ENCODE measurements at regions of chr20 and their contacts with region 1.

Region 1: GRCh38 chr20:63973636-63974402 is 4.1 kb upstream of the ZNF512B start:
- DNase-seq: peak; percentile 77
- ATAC-seq: peak; percentile 31
- H3K4me3 Mint-ChIP-seq: no peak overlapping the region
- H3K27ac Mint-ChIP-seq: no peak overlapping the region
- H3K4me1 Mint-ChIP-seq: peaks cover 38% of the 10 kb centered on the region
- H3K27me3 Mint-ChIP-seq: no peaks in the 10 kb centered on the region
- CTCF ChIP-seq: peak; percentile 99

Region 2: DNA sequence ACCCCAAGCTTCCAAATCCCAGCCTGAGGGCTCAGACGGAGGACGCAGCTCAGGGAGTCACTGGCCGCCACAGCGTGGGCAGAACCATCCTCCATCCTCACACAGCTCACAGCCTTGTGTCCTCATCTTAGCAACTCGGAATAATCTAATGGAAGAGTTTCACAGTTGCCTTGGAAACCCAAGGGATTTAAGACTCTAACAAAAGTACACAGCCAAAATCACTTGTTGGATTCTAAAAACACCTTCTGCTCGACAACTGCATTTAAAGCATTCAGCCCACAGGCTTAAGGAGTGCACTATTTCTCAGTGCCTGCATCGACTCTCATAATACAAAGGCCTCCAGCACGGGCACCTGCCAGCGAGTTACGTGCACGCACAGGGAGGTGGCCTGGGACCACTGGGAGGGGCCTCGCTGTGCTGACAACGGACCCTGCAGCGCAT is 188.1 kb before region 1 on chr20:
- CTCF ChIA-PET with region 1: interaction called, 5 read pairs
- POLR2A ChIA-PET with region 1: no interaction called
- intact Hi-C with region 1: loop called (anchors 5 kb)
- DNase-seq: no peak
- ATAC-seq: no peak
- H3K4me3 Mint-ChIP-seq: no peak overlapping the region
- H3K27ac Mint-ChIP-seq: no peak overlapping the region
- H3K4me1 Mint-ChIP-seq: peaks cover 11% of the 10 kb centered on the region
- H3K27me3 Mint-ChIP-seq: no peaks in the 10 kb centered on the region
- CTCF ChIP-seq: no peak

Region 3: GRCh38 chr20:63864847-63865640 is 108.8 kb before region 1 on chr20 and contains the start of gene TPD52L2:
- CTCF ChIA-PET with region 1: interaction called, 13 read pairs
- POLR2A ChIA-PET with region 1: no interaction called
- intact Hi-C with region 1: no loop called
- DNase-seq: peak; percentile 99
- ATAC-seq: peak; percentile 85
- H3K4me3 Mint-ChIP-seq: peak within 1 kb of the TSS; percentile 98
- H3K27ac Mint-ChIP-seq: peak within 1 kb of the TSS; percentile 99
- H3K4me1 Mint-ChIP-seq: peaks cover 19% of the 10 kb centered on the region
- H3K27me3 Mint-ChIP-seq: no peaks in the 10 kb centered on the region
- CTCF ChIP-seq: no peak
- total RNA-seq, gene TPD52L2: 43.1 to 44.6 TPM

Region 4: DNA sequence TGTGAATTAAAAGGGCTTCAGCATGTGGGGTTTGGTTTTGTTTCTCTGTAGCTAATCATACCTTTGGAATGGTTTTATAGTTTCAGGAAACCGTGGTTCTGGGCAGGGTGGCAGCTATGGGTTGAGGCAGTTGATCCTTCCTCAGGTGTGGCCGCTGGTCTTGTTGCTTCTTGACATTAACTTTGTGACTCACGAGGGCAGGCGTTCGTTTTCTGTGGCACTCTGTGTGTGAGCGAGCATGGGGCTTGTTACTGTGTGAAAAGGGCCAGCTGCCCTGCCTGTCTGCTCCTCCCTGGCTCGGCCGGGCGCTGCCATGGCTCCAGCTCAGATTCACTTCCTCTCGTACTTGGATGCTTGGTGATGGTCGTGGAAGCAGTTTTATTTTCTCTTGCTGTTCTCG is 62.6 kb before region 1 on chr20:
- CTCF ChIA-PET with region 1: interaction called, 14 read pairs
- POLR2A ChIA-PET with region 1: no interaction called
- intact Hi-C with region 1: no loop called
- DNase-seq: no peak
- ATAC-seq: peak; percentile 27
- H3K4me3 Mint-ChIP-seq: no peak overlapping the region
- H3K27ac Mint-ChIP-seq: peak overlapping the region; percentile 3
- H3K4me1 Mint-ChIP-seq: peaks cover 38% of the 10 kb centered on the region
- H3K27me3 Mint-ChIP-seq: no peaks in the 10 kb centered on the region
- CTCF ChIP-seq: no peak

Region 5: DNA sequence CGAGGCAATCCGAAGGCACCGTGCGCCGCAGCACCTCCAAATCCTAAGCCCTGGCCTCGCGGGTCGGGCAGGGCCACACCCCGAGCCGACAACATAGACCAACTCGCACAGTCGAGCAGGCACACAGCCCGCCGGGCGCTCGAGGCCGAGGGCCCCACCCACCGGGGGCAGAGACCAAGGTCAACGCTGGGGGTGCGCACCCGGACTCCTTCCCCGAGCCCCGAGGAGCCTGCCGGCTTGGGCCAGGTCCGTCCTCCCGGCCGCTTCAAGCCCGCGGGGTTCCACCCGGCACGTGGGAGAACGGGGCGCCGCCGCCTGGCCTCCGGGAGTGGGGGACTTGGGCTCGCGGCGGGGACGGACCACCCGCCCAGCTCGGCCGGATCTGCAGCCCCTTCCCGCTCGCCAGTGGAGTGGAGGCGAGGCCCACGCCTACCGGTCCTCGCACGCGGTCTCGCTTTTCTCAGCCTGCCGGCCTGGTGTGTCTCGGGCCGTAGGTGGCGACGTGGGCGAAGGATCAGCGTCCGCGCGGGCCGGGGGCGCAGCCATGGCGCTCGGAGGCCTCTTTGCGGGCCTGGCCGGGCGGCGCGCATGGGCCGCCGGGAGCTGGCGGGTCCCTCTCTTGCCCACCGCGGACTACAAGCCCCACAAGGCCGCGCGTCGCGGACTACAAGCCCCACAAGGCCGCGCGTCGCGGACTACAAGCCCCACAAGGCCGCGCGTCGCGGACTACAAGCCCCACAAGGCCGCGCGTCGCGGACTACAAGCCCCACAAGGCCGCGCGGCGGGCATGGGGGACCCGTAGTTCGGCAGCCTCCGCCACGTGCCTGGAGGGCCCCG is 17.8 kb before region 1 on chr20 and contains the start of gene UCKL1:
- CTCF ChIA-PET with region 1: interaction called, 13 read pairs
- POLR2A ChIA-PET with region 1: interaction called, 10 read pairs
- intact Hi-C with region 1: no loop called
- DNase-seq: peak; percentile 93
- ATAC-seq: peak; percentile 78
- H3K4me3 Mint-ChIP-seq: peak within 1 kb of the TSS; percentile 81
- H3K27ac Mint-ChIP-seq: peak within 1 kb of the TSS; percentile 93
- H3K4me1 Mint-ChIP-seq: peaks cover 31% of the 10 kb centered on the region
- H3K27me3 Mint-ChIP-seq: no peaks in the 10 kb centered on the region
- CTCF ChIP-seq: peak; percentile 19
- total RNA-seq, gene UCKL1: 31.5 to 32.6 TPM

Region 6: GRCh38 chr20:64062596-64063388 is 89.0 kb after region 1 on chr20 and contains the start of gene TCEA2:
- CTCF ChIA-PET with region 1: interaction called, 11 read pairs
- POLR2A ChIA-PET with region 1: no interaction called
- intact Hi-C with region 1: loop called (anchors 10 kb)
- DNase-seq: peak; percentile 98
- ATAC-seq: peak; percentile 83
- H3K4me3 Mint-ChIP-seq: peak within 1 kb of the TSS; percentile 89
- H3K27ac Mint-ChIP-seq: peak within 1 kb of the TSS; percentile 76
- H3K4me1 Mint-ChIP-seq: peaks cover 40% of the 10 kb centered on the region
- H3K27me3 Mint-ChIP-seq: no peaks in the 10 kb centered on the region
- CTCF ChIP-seq: no peak
- total RNA-seq, gene TCEA2: 30.0 to 33.0 TPM

Region 7: GRCh38 chr20:64119681-64120341 is 146.0 kb after region 1 on chr20:
- CTCF ChIA-PET with region 1: interaction called, 10 read pairs
- POLR2A ChIA-PET with region 1: no interaction called
- intact Hi-C with region 1: no loop called
- DNase-seq: peak; percentile 15
- ATAC-seq: peak; percentile 17
- H3K4me3 Mint-ChIP-seq: peak overlapping the region; percentile 51
- H3K27ac Mint-ChIP-seq: peak overlapping the region; percentile 80
- H3K4me1 Mint-ChIP-seq: peaks cover 9% of the 10 kb centered on the region
- H3K27me3 Mint-ChIP-seq: peaks cover 7% of the 10 kb centered on the region
- CTCF ChIP-seq: no peak

Measured in activated CD8-positive, alpha-beta T cell treated with anti-CD3 and anti-CD28 coated beads for 36 hours (primary cell).